Endothelial cell of umbilical vein (primary cell): ENCODE measurements at regions of chr20 and their contacts with region 1.

Region 1: GRCh38 chr20:5788385-5788895 is 38.2 kb downstream of the SHLD1 start:
- DNase-seq: peak; percentile 82
- H3K4me3 ChIP-seq: no peak overlapping the region
- H3K27ac ChIP-seq: no peak overlapping the region
- H3K4me1 ChIP-seq: peaks cover 6% of the 10 kb centered on the region
- H3K27me3 ChIP-seq: no peaks in the 10 kb centered on the region
- CTCF ChIP-seq: peak; percentile 72 to 73
- POLR2A ChIP-seq: no peak

Region 2: GRCh38 chr20:5535125-5535771 is 253.2 kb before region 1 on chr20:
- CTCF ChIA-PET with region 1: interaction called, 139 read pairs
- POLR2A ChIA-PET with region 1: no interaction called
- dilution Hi-C with region 1: no loop called
- intact Hi-C with region 1: no loop called
- DNase-seq: no peak
- H3K4me3 ChIP-seq: no peak overlapping the region
- H3K27ac ChIP-seq: no peak overlapping the region
- H3K4me1 ChIP-seq: no peaks in the 10 kb centered on the region
- H3K27me3 ChIP-seq: no peaks in the 10 kb centered on the region
- CTCF ChIP-seq: no peak
- POLR2A ChIP-seq: no peak

Region 3: GRCh38 chr20:5580936-5581708 is 207.3 kb before region 1 on chr20:
- CTCF ChIA-PET with region 1: interaction called, 15 read pairs
- POLR2A ChIA-PET with region 1: no interaction called
- dilution Hi-C with region 1: no loop called
- intact Hi-C with region 1: no loop called
- DNase-seq: no peak
- H3K4me3 ChIP-seq: no peak overlapping the region
- H3K27ac ChIP-seq: no peak overlapping the region
- H3K4me1 ChIP-seq: peaks cover 2% of the 10 kb centered on the region
- H3K27me3 ChIP-seq: no peaks in the 10 kb centered on the region
- CTCF ChIP-seq: no peak
- POLR2A ChIP-seq: no peak

Region 4: DNA sequence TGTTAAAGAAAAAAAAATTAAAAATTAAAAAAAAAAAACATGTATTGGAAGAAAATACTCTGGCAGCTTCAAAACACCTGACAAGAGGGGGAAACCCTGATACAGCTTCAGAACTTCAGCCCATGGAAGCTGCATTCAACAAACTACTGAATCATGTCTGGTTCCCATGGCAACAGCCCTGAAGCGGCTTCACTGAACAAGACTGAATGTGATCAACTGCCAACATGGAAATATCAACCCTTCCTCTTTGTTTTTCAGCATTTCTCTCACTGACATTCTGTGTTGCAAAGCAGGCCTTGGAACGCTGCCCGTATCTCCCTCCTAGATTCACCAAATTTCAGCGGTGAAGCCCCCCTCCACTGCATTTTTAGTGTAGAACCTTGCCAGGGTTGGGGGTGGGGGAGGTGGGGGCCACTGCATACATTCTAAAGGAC is 129.5 kb before region 1 on chr20:
- CTCF ChIA-PET with region 1: interaction called, 5 read pairs
- POLR2A ChIA-PET with region 1: no interaction called
- dilution Hi-C with region 1: no loop called
- intact Hi-C with region 1: loop called (anchors 5 kb)
- DNase-seq: peak; percentile 91
- H3K4me3 ChIP-seq: no peak overlapping the region
- H3K27ac ChIP-seq: no peak overlapping the region
- H3K4me1 ChIP-seq: peaks cover 26% of the 10 kb centered on the region
- H3K27me3 ChIP-seq: no peaks in the 10 kb centered on the region
- CTCF ChIP-seq: no peak
- POLR2A ChIP-seq: no peak

Region 5: GRCh38 chr20:5806457-5807263 is 18.2 kb after region 1 on chr20:
- CTCF ChIA-PET with region 1: interaction called, 15 read pairs
- POLR2A ChIA-PET with region 1: interaction called, 4 read pairs
- dilution Hi-C with region 1: no loop called
- intact Hi-C with region 1: no loop called
- DNase-seq: peak; percentile 11
- H3K4me3 ChIP-seq: no peak overlapping the region
- H3K27ac ChIP-seq: no peak overlapping the region
- H3K4me1 ChIP-seq: peaks cover 14% of the 10 kb centered on the region
- H3K27me3 ChIP-seq: no peaks in the 10 kb centered on the region
- CTCF ChIP-seq: peak; percentile 15
- POLR2A ChIP-seq: no peak

Region 6: GRCh38 chr20:5848711-5849505 is 60.5 kb after region 1 on chr20:
- CTCF ChIA-PET with region 1: no interaction called
- POLR2A ChIA-PET with region 1: no interaction called
- dilution Hi-C with region 1: no loop called
- intact Hi-C with region 1: no loop called
- DNase-seq: peak; percentile 31
- H3K4me3 ChIP-seq: no peak overlapping the region
- H3K27ac ChIP-seq: no peak overlapping the region
- H3K4me1 ChIP-seq: no peaks in the 10 kb centered on the region
- H3K27me3 ChIP-seq: no peaks in the 10 kb centered on the region
- CTCF ChIP-seq: no peak
- POLR2A ChIP-seq: no peak

Region 7: GRCh38 chr20:5989539-5989938 is 201.1 kb after region 1 on chr20:
- CTCF ChIA-PET with region 1: no interaction called
- POLR2A ChIA-PET with region 1: no interaction called
- dilution Hi-C with region 1: no loop called
- intact Hi-C with region 1: no loop called
- DNase-seq: no peak
- H3K4me3 ChIP-seq: no peak overlapping the region
- H3K27ac ChIP-seq: no peak overlapping the region
- H3K4me1 ChIP-seq: no peaks in the 10 kb centered on the region
- H3K27me3 ChIP-seq: no peaks in the 10 kb centered on the region
- CTCF ChIP-seq: no peak
- POLR2A ChIP-seq: no peak

Region 8: DNA sequence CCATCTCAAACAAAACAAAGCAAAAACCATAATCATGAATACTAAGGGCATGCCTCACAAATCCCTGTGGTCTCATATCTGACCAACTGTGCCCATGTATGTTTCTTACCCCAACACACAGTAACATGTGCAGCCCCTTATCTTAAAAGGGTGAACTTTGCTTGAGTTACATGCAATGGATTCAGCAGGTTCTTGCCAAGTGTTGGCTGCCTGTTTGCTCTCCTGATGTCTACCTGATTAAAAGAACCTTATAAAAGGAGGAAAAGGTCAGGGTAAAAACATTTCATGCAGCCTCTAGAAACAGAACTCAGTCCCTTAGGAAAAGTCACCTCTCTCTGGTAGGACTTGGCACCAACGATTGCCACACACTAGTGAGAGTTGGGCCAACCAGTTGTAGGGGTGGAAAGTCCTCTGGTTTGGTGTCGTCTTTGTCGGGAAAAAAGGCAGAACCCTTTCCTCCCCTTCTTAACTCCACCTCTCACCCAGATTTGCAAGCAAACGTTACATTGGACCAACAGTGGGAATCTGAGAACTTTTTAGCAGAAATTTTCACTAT is 279.4 kb after region 1 on chr20:
- CTCF ChIA-PET with region 1: no interaction called
- POLR2A ChIA-PET with region 1: no interaction called
- dilution Hi-C with region 1: no loop called
- intact Hi-C with region 1: no loop called
- DNase-seq: no peak
- H3K4me3 ChIP-seq: no peak overlapping the region
- H3K27ac ChIP-seq: no peak overlapping the region
- H3K4me1 ChIP-seq: no peaks in the 10 kb centered on the region
- H3K27me3 ChIP-seq: no peaks in the 10 kb centered on the region
- CTCF ChIP-seq: no peak
- POLR2A ChIP-seq: no peak